Ovary (tissue), 10 donors: ENCODE measurements at regions of chr6 and their contacts with region 1.

Region 1: GRCh38 chr6:120938876-120939472 is 395.3 kb downstream of the TBC1D32 start:
- DNase-seq: no peak
- H3K4me3 ChIP-seq: no peak overlapping the region
- H3K27ac ChIP-seq: no peak overlapping the region
- H3K4me1 ChIP-seq: no peaks in the 10 kb centered on the region
- H3K27me3 ChIP-seq: no peaks in the 10 kb centered on the region
- CTCF ChIP-seq: no peak
- EP300 ChIP-seq: no peak
- POLR2A ChIP-seq: no peak

Region 2: GRCh38 chr6:120526576-120526975 is 412.4 kb before region 1 on chr6:
- intact Hi-C with region 1: no loop called
- DNase-seq: no peak
- H3K4me3 ChIP-seq: no peak overlapping the region
- H3K27ac ChIP-seq: no peak overlapping the region
- H3K4me1 ChIP-seq: no peaks in the 10 kb centered on the region
- H3K27me3 ChIP-seq: no peaks in the 10 kb centered on the region
- CTCF ChIP-seq: no peak
- EP300 ChIP-seq: no peak
- POLR2A ChIP-seq: no peak

Region 3: DNA sequence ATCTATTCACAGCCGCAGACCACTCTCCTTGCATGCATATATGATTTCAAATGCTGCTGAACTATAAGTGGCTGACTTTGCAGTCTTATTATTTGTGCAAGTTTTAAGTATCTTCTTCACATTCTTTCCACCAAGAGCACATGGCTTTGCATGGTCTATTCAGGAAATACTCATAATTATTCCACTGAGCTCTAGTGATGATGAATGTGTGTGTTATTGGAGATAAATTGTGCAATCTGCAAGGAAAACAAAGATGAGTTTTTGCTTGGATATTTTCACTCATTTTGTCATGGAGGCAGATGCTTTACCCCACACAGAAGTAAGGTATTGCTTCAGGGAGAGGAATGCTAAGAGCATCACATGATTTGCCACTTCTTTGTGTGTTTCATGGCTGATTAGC is 369.3 kb before region 1 on chr6:
- intact Hi-C with region 1: no loop called
- DNase-seq: no peak
- H3K4me3 ChIP-seq: no peak overlapping the region
- H3K27ac ChIP-seq: no peak overlapping the region
- H3K4me1 ChIP-seq: no peaks in the 10 kb centered on the region
- H3K27me3 ChIP-seq: no peaks in the 10 kb centered on the region
- CTCF ChIP-seq: no peak
- EP300 ChIP-seq: no peak
- POLR2A ChIP-seq: no peak

Region 4: GRCh38 chr6:120960761-120961160 is 21.8 kb after region 1 on chr6:
- intact Hi-C with region 1: loop called in 1 of 4 experiments (anchors 1 kb)
- DNase-seq: no peak
- H3K4me3 ChIP-seq: no peak overlapping the region
- H3K27ac ChIP-seq: no peak overlapping the region
- H3K4me1 ChIP-seq: no peaks in the 10 kb centered on the region
- H3K27me3 ChIP-seq: no peaks in the 10 kb centered on the region
- CTCF ChIP-seq: no peak
- EP300 ChIP-seq: no peak
- POLR2A ChIP-seq: no peak